Activated CD8-positive, alpha-beta T cell treated with anti-CD3 and anti-CD28 coated beads for 36 hours (primary cell): ENCODE measurements at regions of chr2 and their contacts with region 1.

Region 1: DNA sequence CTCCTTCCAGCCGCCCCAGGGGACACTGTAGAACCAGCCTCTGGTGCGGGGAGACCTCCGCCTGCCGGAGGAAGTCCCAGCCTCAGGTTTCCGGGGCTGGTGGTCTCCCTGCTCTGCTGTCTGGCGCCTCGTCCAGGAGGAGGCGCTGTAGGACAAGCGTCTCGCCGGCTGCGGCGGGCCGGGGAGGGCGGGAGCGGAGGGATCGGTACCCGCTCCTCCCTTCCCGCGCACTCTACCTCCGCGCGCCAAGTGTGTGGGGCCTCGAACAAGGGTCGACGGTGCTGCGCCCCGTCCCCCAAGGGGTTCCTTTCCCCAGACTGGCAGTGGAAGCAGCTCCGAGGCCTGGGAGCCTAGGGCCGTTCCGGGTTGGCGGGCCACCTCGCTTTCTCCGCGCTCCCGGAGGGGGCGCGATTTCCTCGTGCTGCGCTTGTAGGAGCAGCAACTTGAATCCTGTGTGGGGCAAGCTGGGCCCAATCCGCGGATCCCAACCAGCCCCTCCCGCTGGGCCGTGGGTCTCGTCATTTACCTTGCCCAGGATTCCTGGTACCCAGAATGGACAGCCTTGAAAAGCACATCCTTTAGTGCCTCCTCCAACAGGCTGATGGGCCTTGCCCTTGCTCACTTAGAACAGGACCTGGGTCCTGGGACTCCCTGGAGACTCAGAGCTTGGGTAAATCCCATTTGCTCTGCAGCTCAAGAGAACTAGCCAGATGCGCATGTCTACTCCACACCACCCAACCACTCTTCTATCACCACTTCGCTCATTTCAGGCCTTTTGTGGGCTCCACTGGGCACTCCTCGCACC is 10.6 kb upstream of the HOXD4 start:
- DNase-seq: peak; percentile 76
- ATAC-seq: peak; percentile 94
- H3K4me3 Mint-ChIP-seq: peak overlapping the region; percentile 56
- H3K27ac Mint-ChIP-seq: no peak overlapping the region
- H3K4me1 Mint-ChIP-seq: peaks cover 23% of the 10 kb centered on the region
- H3K27me3 Mint-ChIP-seq: peaks cover 68% of the 10 kb centered on the region
- CTCF ChIP-seq: peak; percentile 94

Region 2: GRCh38 chr2:176151442-176152369 is 11.0 kb after region 1 on chr2 and contains the start of gene HOXD4:
- CTCF ChIA-PET with region 1: interaction called, 17 read pairs
- POLR2A ChIA-PET with region 1: no interaction called
- intact Hi-C with region 1: no loop called
- DNase-seq: no peak
- ATAC-seq: no peak
- H3K4me3 Mint-ChIP-seq: no peak within 1 kb of the TSS
- H3K27ac Mint-ChIP-seq: no peak within 1 kb of the TSS
- H3K4me1 Mint-ChIP-seq: peaks cover 7% of the 10 kb centered on the region
- H3K27me3 Mint-ChIP-seq: peaks cover 82% of the 10 kb centered on the region
- CTCF ChIP-seq: no peak
- total RNA-seq, gene HOXD4: not detected

Region 3: DNA sequence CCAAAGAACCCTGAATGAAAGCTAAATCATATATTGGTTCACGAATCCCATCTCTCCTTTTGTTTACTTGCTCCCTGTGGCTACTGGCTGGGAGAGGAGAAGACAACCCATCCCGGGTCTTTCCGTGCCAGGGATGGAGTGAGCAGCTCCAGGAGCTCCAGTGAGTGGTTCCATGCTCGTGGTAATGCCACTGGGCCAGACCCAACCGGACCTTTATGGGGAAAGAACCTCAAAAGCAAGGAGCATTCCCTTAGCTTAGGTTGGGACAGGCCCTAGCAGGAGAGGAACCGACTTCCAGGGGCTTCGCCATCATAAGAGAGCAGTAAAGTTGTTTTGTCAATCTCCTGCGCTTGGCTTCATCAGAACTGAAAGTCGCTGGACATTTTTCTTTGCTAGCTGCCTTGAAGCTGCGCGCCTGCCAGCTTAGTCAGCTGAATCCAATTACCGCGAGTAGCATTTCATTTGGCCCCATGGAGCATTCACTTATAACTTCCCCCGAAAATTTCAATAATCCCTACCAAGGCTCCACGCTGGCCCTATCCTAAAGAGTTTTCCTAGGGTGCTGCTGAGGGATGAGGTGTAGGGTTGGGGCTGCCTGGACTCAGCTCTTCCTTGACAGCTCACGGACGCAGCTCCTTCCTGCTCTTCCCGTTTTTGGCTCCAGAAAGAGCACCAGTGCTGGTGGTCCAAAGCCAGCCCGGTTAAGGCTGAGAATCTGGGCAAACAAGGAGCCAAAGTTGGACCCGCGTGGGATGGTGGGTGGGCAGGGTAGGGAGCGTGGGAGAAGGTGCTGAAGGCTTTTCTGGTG is 21.3 kb after region 1 on chr2:
- CTCF ChIA-PET with region 1: interaction called, 34 read pairs
- POLR2A ChIA-PET with region 1: interaction called, 3 read pairs
- intact Hi-C with region 1: no loop called
- DNase-seq: no peak
- ATAC-seq: no peak
- H3K4me3 Mint-ChIP-seq: no peak overlapping the region
- H3K27ac Mint-ChIP-seq: no peak overlapping the region
- H3K4me1 Mint-ChIP-seq: peaks cover 23% of the 10 kb centered on the region
- H3K27me3 Mint-ChIP-seq: peaks cover 83% of the 10 kb centered on the region
- CTCF ChIP-seq: no peak

Region 4: DNA sequence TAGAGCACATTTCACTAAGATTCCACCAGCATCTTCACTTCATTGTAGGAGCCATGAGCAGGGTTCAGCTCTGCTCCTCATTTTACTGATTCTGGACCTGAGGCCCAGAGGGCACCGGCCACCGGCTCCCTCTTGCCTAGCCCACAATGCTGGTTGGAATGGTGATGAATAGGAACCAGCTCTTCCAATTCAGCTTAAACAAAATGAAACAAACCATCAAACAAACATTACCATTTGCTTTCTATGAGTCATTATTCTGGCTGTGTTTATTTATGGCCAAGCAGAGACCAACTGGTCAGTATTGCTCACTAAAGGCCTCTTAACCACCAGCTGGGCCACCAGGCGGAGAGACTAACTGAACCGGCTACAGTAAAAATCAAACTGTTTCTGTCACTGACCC is 305.2 kb after region 1 on chr2:
- CTCF ChIA-PET with region 1: interaction called, 13 read pairs
- POLR2A ChIA-PET with region 1: no interaction called
- intact Hi-C with region 1: no loop called
- DNase-seq: no peak
- ATAC-seq: no peak
- H3K4me3 Mint-ChIP-seq: no peak overlapping the region
- H3K27ac Mint-ChIP-seq: no peak overlapping the region
- H3K4me1 Mint-ChIP-seq: no peaks in the 10 kb centered on the region
- H3K27me3 Mint-ChIP-seq: peaks cover 2% of the 10 kb centered on the region
- CTCF ChIP-seq: no peak

Region 5: DNA sequence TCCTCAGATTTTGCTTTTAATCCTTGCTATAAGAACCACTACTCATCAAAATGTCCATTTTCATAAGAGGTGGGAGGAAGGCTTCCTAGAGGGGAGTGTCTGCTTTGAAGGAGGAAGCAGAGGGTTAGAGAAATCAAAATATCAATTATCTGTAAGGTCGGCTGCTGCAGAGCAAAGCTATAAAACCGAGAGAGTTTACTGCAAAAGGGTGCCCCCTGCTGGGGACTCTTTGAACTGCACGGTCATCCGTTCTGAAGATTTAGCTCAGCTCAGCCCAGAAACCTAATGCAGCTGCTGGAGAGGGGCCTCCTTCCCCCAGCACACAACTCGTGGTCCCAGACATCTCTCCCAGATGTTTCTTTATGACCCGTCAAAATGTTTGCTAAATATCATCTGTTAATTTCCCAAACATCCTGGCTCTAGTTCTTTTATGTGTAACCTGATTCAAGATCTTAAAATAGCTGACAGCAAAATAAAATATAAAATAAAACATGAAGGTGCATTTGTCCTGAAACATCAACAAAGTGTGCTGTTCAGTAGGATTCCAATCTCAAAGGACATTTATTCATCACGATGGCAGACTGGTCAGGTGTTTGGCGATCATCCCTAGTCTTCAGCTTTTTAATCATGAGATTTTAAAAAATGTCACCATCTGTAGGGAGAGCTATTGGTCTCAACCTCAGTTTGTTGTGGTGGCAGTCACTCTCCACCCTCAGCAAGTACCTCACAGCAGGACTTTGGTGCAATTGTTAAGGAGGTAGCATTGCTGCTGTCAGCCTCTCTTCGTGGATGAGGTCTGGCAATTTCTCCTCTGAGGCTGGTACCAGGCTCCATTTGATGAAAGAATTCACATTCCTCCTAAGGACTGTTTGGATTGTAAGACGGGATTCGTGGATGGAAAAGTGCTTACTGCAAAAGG is 314.4 kb after region 1 on chr2:
- CTCF ChIA-PET with region 1: interaction called, 117 read pairs
- POLR2A ChIA-PET with region 1: no interaction called
- intact Hi-C with region 1: loop called (anchors 1 kb)
- DNase-seq: peak; percentile 94
- ATAC-seq: peak; percentile 83
- H3K4me3 Mint-ChIP-seq: no peak overlapping the region
- H3K27ac Mint-ChIP-seq: no peak overlapping the region
- H3K4me1 Mint-ChIP-seq: peaks cover 2% of the 10 kb centered on the region
- H3K27me3 Mint-ChIP-seq: peaks cover 25% of the 10 kb centered on the region
- CTCF ChIP-seq: peak; percentile 85